Mammary epithelial cell (primary cell): ENCODE measurements at regions of chr6 and their contacts with region 1.

Region 1: GRCh38 chr6:43838276-43839036 is 68.4 kb downstream of the VEGFA start:
- DNase-seq: peak; percentile 20
- H3K4me3 ChIP-seq: no peak overlapping the region
- H3K27ac ChIP-seq: no peak overlapping the region
- H3K4me1 ChIP-seq: peaks cover 9% of the 10 kb centered on the region
- H3K27me3 ChIP-seq: no peaks in the 10 kb centered on the region
- CTCF ChIP-seq: peak; percentile 33 to 59

Region 2: GRCh38 chr6:43667245-43668150 is 171.0 kb before region 1 on chr6:
- CTCF ChIA-PET with region 1: no interaction called
- dilution Hi-C with region 1: no loop called
- in situ Hi-C with region 1: no loop called
- intact Hi-C with region 1: loop called (anchors 10 kb)
- DNase-seq: peak; percentile 69
- H3K4me3 ChIP-seq: no peak overlapping the region
- H3K27ac ChIP-seq: peak overlapping the region; percentile 2
- H3K4me1 ChIP-seq: peaks cover 47% of the 10 kb centered on the region
- H3K27me3 ChIP-seq: no peaks in the 10 kb centered on the region
- CTCF ChIP-seq: peak; percentile 96 to 98

Region 3: DNA sequence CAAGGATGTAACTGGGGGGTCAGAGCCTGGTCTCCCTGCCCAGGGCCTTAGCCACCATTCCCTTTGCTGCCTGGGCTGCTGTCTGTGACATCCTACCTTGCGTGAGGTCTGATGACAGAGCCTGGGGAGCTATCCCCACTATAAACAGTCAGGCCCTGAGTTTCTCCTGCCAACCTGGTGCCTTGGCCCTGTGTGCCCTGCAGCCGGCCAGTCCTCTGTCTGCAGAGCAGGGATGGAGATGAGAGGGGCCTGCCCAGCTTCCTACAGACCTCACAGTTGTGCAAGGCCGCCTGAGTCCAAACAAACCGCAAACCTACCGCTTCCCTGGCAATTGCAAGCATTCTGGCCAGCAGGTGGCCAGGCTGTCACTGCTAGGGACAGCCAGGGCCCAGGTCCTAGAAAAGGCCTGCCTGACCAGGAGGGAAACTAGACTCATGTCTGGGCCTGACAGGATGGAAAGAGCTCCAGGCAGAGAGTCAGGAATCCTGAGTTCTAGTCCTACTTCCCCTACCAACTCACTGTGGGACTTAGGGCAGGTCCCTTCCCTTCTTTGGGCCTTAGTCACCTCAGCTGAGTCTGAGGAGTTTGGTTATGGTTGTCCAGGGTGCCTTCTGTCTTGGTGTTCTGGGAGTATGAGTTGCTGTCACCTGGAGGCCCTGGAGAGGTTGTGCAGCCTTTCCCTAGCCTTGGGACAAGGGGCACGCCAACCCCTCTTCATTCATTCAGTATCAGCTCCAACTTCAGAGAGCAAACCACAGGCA is 17.7 kb after region 1 on chr6:
- CTCF ChIA-PET with region 1: no interaction called
- dilution Hi-C with region 1: no loop called
- in situ Hi-C with region 1: no loop called
- intact Hi-C with region 1: loop called (anchors 2 kb)
- DNase-seq: peak; percentile 45
- H3K4me3 ChIP-seq: no peak overlapping the region
- H3K27ac ChIP-seq: no peak overlapping the region
- H3K4me1 ChIP-seq: peaks cover 7% of the 10 kb centered on the region
- H3K27me3 ChIP-seq: no peaks in the 10 kb centered on the region
- CTCF ChIP-seq: peak; percentile 36 to 61